ENCODE measurements at regions of chr3 and their contacts with region 1.

Region 1: DNA sequence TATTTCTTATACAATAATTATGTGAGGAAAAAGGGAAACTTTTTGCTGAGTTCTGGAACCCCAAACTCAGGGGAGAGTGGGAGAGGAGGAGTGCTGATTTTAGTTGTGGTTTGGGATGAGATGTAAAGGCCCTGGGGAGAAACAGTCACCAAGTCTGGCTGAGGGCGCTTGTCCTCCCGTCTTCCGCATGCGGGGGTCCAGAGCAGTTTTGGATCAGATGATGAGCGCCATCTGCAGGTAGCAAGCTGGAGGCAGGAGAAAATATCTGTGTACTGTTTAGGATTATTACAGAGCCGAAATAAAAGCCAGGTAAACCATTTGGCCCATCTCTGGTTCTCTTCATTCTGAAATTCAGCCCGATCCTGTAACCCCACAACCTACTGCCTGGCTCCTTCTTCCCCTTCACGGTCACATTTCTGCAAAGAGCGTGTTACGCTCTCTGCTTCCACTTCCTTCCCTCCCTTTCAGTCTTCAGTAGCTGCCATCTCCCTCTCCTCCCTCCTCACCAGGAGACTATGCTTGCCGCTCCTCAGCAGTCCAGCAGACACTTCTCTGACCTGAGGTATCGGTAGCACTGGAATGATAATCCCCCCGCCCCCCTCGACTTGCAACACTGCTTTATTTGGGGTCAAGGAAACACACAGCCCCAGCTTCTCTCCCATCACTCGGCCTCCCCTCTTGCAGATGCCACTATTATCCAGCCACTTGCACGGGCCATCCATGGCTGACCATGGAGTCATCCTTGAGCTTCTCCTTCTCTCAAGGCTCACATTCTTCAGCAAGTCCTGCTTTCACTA is 1.4 kb upstream of the PARP14 start:
- DNase-seq: peak; percentile 82 to 94 (median 88)
- H3K4me3 ChIP-seq: peak overlapping the region in 2 of 4 donors; percentile 15 to 97
- H3K27ac ChIP-seq: peak overlapping the region; percentile 90 to 99 (median 95)
- H3K4me1 ChIP-seq: peaks cover 8 to 38% of the 10 kb centered on the region in 2 donors
- H3K27me3 ChIP-seq: no peaks in the 10 kb centered on the region
- CTCF ChIP-seq: peak; percentile 65 to 91 (median 87)
- POLR2A ChIP-seq: peak in 1 of 2 donors; percentile 8

Region 2: DNA sequence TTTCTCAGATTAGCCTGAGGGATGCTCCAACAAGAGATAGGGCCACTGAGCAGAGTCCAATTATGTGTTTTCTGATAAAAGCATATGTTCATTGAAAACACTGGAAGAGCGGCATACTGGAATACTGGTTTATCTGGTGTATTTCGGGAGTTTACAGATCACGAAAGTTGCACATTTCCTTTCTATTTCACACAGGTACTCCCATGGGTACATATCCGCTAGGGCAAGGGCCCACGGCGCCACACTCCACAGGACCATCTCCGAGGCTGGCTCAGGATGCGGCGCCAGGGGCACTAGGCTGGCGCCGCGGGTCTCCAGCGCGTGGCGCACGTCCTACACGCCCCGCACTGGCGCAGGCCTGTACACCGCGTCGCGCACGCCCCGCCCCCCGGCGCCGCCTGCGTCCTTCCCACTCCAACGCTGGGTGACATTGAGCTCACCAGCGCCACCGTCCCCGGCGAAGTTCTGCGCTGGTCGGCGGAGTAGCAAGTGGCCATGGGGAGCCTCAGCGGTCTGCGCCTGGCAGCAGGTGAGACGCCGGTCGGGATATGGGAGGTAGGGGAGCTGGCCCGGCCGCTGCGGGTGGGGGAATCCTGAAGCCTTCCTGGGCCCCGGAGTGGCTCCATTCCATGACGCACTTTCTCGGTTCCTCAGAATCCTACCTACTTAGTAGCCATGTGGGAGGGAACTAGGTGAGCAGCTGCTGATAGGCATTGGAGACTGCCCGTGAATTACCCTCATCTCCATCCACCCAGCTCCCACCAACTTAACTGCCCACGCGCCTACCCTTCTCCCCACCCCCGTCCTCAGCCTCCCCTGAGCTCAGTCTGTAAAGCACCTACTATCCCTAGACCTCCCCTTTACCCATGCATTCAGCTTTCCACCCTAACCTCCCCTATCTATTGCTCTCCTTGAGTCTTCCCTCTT is 295.2 kb before region 1 on chr3 and contains the start of gene FAM162A:
- intact Hi-C with region 1: loop called in 1 of 2 experiments (anchors 10 kb)
- DNase-seq: peak; percentile 93 to 97 (median 95)
- H3K4me3 ChIP-seq: peak within 1 kb of the TSS; percentile 54 to 79 (median 65)
- H3K27ac ChIP-seq: peak within 1 kb of the TSS; percentile 35 to 96 (median 85)
- H3K4me1 ChIP-seq: peaks cover 7 to 31% of the 10 kb centered on the region in 2 donors
- H3K27me3 ChIP-seq: no peaks in the 10 kb centered on the region
- CTCF ChIP-seq: peak in 5 of 6 experiments; percentile 34 to 52 (median 47)
- POLR2A ChIP-seq: peak; percentile 88 to 97
- total RNA-seq, gene FAM162A: 36.2 to 158 (median 71.5) TPM

Region 3: DNA sequence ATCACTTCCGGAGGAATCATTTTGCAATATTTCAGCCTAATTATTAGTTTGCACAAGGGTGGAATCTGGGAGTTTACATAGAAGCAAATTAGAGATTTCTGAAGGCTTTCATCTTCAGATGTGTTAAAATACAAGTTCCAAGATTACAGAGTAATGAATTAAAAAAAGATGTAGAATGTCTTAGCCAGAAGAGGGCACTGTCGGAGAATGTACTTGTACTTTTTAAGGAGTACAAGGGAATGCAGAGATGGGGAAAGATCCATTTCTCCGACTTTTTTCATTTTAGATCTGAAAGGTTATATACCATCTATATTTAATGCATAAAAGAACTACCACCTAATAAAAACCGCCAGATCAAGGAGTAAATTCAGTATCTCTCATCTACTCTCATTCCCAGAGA is 220.3 kb before region 1 on chr3:
- intact Hi-C with region 1: loop called in 1 of 2 experiments (anchors 10 kb)
- DNase-seq: peak in 2 of 7 donors; percentile 29 to 39
- H3K4me3 ChIP-seq: no peak overlapping the region
- H3K27ac ChIP-seq: no peak overlapping the region
- H3K4me1 ChIP-seq: peaks cover 0 to under 1% of the 10 kb centered on the region in 2 donors
- H3K27me3 ChIP-seq: no peaks in the 10 kb centered on the region
- CTCF ChIP-seq: peak; percentile 41 to 55 (median 52)
- POLR2A ChIP-seq: no peak

Region 4: GRCh38 chr3:122563717-122564025 is 115.6 kb before region 1 on chr3:
- intact Hi-C with region 1: loop called (anchors 2 to 5 kb)
- DNase-seq: peak in 4 of 7 donors; percentile 21 to 37 (median 29)
- H3K4me3 ChIP-seq: peak overlapping the region; percentile 71 to 94 (median 84)
- H3K27ac ChIP-seq: peak overlapping the region; percentile 94 to 98 (median 96)
- H3K4me1 ChIP-seq: peaks cover 6 to 36% of the 10 kb centered on the region in 2 donors
- H3K27me3 ChIP-seq: no peaks in the 10 kb centered on the region
- CTCF ChIP-seq: no peak
- POLR2A ChIP-seq: no peak

Region 5: GRCh38 chr3:122568755-122569154 is 110.5 kb before region 1 on chr3:
- intact Hi-C with region 1: loop called (anchors 2 to 5 kb)
- DNase-seq: no peak
- H3K4me3 ChIP-seq: no peak overlapping the region
- H3K27ac ChIP-seq: no peak overlapping the region
- H3K4me1 ChIP-seq: peaks cover 9 to 38% of the 10 kb centered on the region in 2 donors
- H3K27me3 ChIP-seq: no peaks in the 10 kb centered on the region
- CTCF ChIP-seq: no peak
- POLR2A ChIP-seq: no peak